ENCODE measurements at regions of chr19 and their contacts with region 1.

Region 1: DNA sequence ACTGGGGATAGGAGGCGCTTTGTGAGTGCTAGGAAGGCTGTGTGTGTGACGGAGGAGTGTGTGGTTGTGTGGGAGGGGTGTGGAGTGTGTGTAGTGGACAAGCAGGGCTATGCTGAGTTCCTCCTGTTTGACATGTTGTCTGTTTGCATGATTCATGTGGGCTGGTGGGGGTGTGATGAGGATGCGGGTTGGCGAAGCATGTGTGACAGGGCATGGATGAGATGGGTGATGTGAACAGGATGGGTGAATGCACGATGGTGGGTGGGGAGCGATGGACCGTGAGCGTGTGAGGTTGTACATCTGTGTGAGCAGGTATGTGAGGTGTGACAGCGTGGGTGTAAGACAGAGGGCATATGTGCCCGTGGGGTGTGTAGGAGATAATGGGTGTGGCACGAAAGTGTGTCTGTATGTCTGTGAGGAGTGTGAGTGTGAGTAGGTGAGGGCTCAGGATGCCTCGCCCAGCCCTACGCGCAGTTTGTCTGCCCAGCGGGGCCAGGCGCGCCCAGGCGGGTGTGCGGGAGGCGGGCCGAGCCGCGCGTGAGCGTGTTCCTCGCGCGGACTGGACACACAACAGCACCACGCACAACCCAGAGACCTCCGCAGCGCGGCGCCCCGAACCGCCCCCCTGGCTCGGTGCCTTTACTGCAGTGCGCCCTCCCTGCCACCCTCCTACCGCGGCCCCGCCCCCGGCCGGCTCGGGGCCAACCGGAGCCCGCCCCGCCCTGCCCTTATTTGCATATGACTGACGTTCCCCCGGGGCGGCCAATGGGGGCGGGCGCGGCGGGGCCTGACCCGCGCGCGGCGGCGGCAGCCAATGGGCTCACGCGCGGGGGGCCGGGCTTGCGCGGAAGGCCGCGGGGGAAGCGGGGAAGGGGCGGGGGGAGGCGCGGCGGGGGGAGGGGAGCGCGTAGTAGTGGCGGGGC is 14.4 kb downstream of the CIC start:
- DNase-seq: peak; percentile 93 to 97 (median 96)
- H3K4me3 ChIP-seq: peak overlapping the region in 6 of 7 experiments; percentile 2 to 91 (median 64)
- H3K27ac ChIP-seq: peak overlapping the region; percentile 4 to 73
- H3K4me1 ChIP-seq: peaks cover 9 to 73% (median 63%) of the 10 kb centered on the region in 4 experiments
- H3K27me3 ChIP-seq: no peaks in the 10 kb centered on the region

Region 2: DNA sequence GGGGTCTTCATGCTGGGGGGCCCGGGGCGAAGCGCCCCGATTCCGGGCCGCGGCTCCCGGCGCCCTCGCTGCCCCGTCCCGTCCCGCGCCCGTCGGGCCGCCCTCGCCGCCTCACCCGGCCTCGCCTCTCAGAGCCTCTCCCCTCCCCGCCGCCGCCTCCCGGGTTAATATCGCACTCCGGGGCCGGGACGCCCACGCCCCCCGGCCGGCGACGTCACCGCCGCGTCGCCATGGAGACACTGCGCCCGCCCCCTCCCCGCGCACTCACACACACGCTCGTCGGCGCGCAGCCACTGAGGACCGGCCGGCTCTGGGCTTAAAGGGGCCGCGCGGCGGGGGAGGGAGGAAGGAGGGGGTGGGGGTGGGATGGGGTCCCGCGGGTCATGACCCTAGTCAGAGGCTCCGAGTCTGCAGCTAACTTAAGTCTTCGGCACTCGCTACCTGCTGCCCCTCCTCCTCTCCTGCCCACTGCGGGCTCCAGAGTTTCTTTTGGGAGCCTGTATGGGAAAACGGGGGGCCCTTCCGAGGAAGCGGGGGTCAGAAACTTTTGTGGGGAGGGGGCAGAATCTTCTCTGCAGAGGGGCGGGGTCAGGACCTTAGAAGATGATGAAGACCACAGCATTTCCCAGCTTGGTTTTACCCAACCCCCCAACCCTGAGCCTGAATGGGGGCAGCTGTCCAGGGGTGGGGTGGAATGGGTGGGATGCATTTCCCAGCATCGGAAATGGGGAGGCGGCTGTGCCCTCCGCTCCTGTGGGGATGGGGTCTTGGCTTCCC is 28.2 kb before region 1 on chr19 and contains the start of gene ERF:
- CTCF ChIA-PET with region 1: interaction called, 159 read pairs
- POLR2A ChIA-PET with region 1: interaction called, 10 read pairs
- DNase-seq: peak; percentile 89 to 95 (median 94)
- H3K4me3 ChIP-seq: peak within 1 kb of the TSS; percentile 84 to 96 (median 89)
- H3K27ac ChIP-seq: peak within 1 kb of the TSS; percentile 74 to 89
- H3K4me1 ChIP-seq: peaks cover 0 to 44% (median 40%) of the 10 kb centered on the region in 4 experiments
- H3K27me3 ChIP-seq: no peaks in the 10 kb centered on the region

Region 3: DNA sequence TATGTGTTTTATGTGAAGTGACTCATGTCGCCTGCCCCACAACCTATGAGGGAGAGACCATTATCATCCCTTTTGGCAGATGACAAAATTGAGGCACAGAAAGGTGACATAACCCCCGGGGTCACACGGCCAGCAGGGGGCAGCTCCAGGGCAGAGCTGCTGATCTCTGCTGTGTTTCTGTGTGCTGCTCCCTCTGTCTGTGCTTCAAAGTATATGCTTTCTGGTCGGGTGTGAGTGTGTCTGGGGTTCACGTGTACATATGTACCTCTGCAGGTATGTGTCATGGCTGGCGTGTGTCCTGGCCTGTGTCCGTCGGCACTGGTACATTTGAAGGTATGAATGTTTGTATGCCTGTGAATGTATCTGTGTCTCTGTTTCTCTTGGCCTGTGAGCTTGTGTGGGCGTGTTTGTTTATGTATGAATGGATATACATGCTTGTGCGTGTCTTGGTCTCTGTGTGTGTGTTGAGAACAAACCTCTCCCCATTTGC is 136.7 kb after region 1 on chr19:
- CTCF ChIA-PET with region 1: no interaction called
- POLR2A ChIA-PET with region 1: no interaction called
- DNase-seq: peak; percentile 59 to 77 (median 73)
- H3K4me3 ChIP-seq: no peak overlapping the region
- H3K27ac ChIP-seq: no peak overlapping the region
- H3K4me1 ChIP-seq: peaks cover 7 to 34% (median 25%) of the 10 kb centered on the region in 4 experiments
- H3K27me3 ChIP-seq: peaks cover 0 to 7% (median 0%) of the 10 kb centered on the region in 5 experiments